Right ventricle myocardium inferior (tissue), 1 donor: ENCODE measurements at regions of chr20 and their contacts with region 1.

Region 1: DNA sequence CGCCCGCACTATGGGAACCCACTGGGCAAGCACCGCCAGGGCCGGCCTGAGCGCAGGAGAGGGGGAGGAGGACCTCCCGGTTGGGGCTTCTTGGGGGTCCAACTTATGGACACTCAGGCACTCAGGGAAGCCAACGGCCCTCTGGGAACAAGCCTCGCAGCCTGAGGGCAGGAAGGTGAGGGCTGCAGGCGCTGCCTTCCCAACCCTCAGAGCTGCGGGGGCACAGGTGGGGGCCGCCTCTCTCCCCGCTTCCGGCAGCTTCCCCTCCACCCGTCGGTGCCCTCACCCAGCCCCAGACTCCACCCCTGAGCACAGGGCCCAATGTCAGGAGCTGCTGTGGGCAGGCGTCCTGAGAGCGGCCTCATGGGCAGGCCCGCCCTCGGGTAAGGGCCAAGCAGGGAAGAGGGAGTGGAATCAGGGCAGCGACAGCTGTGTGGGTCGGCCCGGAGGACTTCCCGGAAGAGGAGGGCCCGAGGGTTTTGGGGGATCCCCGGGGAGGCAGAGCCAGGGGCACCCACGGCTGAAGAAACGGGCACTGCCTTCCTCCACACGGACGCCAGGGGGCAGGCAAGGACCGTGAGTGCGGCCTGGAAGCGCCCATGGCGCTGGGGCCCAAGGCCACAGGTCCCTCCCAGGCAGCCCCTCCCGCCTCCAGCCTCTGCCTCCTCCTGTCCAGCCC is 488 bp upstream of the PTK6 start:
- DNase-seq: peak; percentile 92
- ATAC-seq: peak; percentile 91

Region 2: GRCh38 chr20:63577317-63577894 is 39.7 kb after region 1 on chr20:
- intact Hi-C with region 1: loop called (anchors 2 kb)
- DNase-seq: no peak
- ATAC-seq: peak; percentile 45

Region 3: DNA sequence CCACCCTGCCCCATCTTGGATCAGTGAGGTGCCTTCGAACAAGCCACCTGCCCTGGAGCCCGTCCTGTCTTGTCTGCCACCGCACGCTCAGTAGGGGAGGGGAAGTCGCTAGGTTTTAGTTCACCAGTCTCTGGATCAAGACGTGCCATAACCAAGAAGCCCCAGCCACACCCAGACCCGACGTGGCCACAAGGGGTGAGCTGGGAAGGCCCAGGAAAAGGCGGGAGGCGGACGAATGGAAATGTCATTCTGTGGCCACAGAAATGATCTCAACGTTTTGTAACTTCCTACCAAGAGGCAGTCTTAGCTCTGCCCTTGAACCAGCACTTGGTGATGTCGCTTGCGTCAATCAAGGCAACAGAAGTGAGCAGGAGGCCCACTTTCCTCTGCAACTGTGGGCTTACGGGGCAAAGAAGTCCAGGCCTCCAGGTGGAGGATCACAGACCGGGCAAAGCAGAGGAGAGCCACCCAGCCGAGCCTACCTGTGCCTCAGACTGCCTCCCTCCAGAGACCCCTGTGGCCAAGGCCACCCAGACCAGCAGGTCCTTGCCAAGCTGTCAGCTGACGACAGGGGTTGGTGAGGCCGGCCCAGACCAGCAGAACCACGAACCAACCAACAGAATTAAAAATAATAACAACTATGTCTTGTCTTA is 74.7 kb after region 1 on chr20:
- intact Hi-C with region 1: loop called (anchors 5 kb)
- DNase-seq: no peak
- ATAC-seq: no peak